T-cell (primary cell): ENCODE measurements at regions of chr1 and their contacts with region 1.

Region 1: DNA sequence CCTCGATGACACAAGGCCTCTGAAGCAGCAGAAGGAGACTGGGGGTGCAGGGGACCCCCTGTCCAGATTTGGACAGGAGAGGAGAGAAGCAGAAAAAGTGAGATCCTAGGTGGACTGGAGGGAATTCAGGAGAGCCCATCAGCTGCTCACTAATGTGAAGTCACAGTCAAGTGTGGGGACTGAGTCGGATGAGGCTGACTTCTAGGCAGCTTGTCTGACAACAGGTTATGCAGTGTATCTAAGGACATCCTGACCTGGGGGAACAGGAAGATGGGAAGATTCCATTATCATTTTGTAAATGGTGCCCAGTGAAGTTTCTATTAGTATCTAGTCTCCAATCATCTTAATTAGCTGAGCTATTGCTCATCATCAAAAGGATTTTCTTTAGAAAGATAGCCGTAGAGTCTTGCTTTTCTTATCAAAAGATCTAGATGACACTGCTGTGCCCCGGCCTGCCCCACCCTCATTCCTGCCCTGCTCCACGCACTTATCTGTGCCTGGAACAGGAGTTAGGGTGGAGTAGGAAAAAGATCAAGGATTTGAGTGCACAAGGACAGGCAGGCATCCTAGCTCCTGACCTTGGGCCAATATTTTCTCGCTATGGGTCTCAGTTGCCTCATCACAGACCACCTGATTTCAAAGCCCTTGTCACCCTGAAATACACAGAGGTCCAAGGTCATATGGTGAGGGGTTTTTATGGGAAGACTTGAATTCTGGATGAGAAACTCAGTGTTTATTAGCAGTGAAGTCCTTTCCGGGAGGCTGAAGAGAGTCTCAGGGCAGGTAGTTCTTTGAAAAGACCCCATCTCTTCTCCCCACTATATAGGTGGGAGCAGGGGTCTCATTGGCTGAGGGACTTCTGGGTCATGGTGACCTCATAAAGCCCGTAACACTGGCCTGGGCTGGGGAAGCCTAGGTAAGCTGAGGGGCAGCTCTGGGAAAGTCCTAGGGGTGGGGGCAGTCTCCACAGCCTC is at the start of gene MROH7:
- DNase-seq: no peak
- ATAC-seq: no peak
- H3K4me3 ChIP-seq: no peak within 1 kb of the TSS
- H3K4me3 Mint-ChIP-seq: no peak within 1 kb of the TSS
- H3K27ac ChIP-seq: no peak within 1 kb of the TSS
- H3K27ac Mint-ChIP-seq: no peak within 1 kb of the TSS
- H3K4me1 ChIP-seq: no peaks in the 10 kb centered on the region
- H3K4me1 Mint-ChIP-seq: no peaks in the 10 kb centered on the region
- H3K27me3 ChIP-seq: peaks cover 0 to 7% of the 10 kb centered on the region in 2 experiments
- H3K27me3 Mint-ChIP-seq: peaks cover 9 to 13% of the 10 kb centered on the region in 2 donors
- total RNA-seq, gene MROH7: 0.15 to 0.63 (median 0.25) TPM

Region 2: GRCh38 chr1:54610601-54611580 is 30.3 kb before region 1 on chr1:
- CTCF ChIA-PET with region 1: interaction called in 1 of 2 experiments, 12 read pairs
- POLR2A ChIA-PET with region 1: no interaction called
- DNase-seq: no peak
- ATAC-seq: no peak
- H3K4me3 ChIP-seq: no peak overlapping the region
- H3K4me3 Mint-ChIP-seq: no peak overlapping the region
- H3K27ac ChIP-seq: no peak overlapping the region
- H3K27ac Mint-ChIP-seq: no peak overlapping the region
- H3K4me1 ChIP-seq: no peaks in the 10 kb centered on the region
- H3K4me1 Mint-ChIP-seq: no peaks in the 10 kb centered on the region
- H3K27me3 ChIP-seq: peaks cover 0 to 13% of the 10 kb centered on the region in 2 experiments
- H3K27me3 Mint-ChIP-seq: no peaks in the 10 kb centered on the region

Region 3: GRCh38 chr1:54668567-54668966 is 27.4 kb after region 1 on chr1:
- CTCF ChIA-PET with region 1: no interaction called
- POLR2A ChIA-PET with region 1: no interaction called
- DNase-seq: no peak
- ATAC-seq: no peak
- H3K4me3 ChIP-seq: no peak overlapping the region
- H3K4me3 Mint-ChIP-seq: no peak overlapping the region
- H3K27ac ChIP-seq: no peak overlapping the region
- H3K27ac Mint-ChIP-seq: no peak overlapping the region
- H3K4me1 ChIP-seq: peaks cover 0 to 4% of the 10 kb centered on the region in 2 experiments
- H3K4me1 Mint-ChIP-seq: peaks cover 0 to 6% (median 6%) of the 10 kb centered on the region in 3 donors
- H3K27me3 ChIP-seq: peaks cover 0 to 7% of the 10 kb centered on the region in 2 experiments
- H3K27me3 Mint-ChIP-seq: peaks cover 0 to 4% of the 10 kb centered on the region in 2 donors

Region 4: DNA sequence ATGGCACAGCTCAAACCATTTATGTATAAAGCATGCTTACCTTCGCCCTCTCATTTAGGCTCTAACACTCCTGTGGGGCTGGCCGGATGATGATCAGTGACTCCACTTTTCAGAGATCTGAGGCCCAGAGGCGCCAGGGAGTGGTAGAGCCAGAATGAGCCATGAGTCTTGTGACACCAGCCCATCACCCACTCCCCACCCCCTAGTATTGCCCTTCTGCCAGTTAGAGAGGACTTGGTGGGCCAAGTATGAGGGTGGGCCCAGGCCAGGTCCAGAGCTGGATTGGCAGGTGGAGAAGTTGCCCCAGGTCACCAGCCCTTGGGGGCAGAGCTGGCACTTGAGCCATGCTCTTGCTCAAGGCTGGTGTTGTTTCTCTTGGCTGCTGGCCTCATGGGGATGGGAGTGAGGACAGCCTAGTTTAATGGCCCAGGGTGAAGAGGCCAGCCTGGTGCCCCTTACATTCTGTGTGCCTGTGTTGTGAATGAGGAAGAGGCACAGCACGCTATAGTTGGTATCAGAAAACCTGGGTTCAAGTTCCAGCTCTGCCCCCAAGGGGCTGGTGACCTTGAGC is 44.3 kb after region 1 on chr1:
- CTCF ChIA-PET with region 1: no interaction called
- POLR2A ChIA-PET with region 1: no interaction called
- DNase-seq: no peak
- ATAC-seq: no peak
- H3K4me3 ChIP-seq: no peak overlapping the region
- H3K4me3 Mint-ChIP-seq: no peak overlapping the region
- H3K27ac ChIP-seq: no peak overlapping the region
- H3K27ac Mint-ChIP-seq: no peak overlapping the region
- H3K4me1 ChIP-seq: no peaks in the 10 kb centered on the region
- H3K4me1 Mint-ChIP-seq: no peaks in the 10 kb centered on the region
- H3K27me3 ChIP-seq: peaks cover 0 to 6% of the 10 kb centered on the region in 2 experiments
- H3K27me3 Mint-ChIP-seq: peaks cover 0 to 7% of the 10 kb centered on the region in 2 donors